Panc1 (cell line): ENCODE measurements at regions of chr11 and their contacts with region 1.

Region 1: DNA sequence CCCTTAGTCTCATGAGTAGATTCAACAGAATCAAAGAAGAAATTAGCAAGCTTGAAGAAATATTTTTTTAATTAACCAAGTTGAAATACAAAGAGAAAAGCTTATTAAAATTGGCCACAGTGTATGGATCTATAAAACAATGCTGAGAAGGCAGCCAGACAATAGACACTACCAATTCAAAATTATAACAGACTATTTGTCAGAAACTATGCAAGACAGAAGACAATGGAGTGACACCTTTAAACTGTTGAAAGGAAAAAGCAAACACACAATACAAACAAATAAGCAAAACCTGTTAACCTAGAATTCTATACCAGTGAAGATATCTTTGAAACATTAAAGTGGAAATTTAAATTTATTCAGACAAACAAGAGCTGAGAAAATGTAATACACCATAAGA is 225.4 kb downstream of the CASP12 start:
- DNase-seq: no peak
- ATAC-seq: no peak
- H3K4me3 ChIP-seq: no peak overlapping the region
- H3K27ac ChIP-seq: no peak overlapping the region
- H3K4me1 ChIP-seq: no peaks in the 10 kb centered on the region
- H3K27me3 ChIP-seq: no peaks in the 10 kb centered on the region
- CTCF ChIP-seq: no peak

Region 2: DNA sequence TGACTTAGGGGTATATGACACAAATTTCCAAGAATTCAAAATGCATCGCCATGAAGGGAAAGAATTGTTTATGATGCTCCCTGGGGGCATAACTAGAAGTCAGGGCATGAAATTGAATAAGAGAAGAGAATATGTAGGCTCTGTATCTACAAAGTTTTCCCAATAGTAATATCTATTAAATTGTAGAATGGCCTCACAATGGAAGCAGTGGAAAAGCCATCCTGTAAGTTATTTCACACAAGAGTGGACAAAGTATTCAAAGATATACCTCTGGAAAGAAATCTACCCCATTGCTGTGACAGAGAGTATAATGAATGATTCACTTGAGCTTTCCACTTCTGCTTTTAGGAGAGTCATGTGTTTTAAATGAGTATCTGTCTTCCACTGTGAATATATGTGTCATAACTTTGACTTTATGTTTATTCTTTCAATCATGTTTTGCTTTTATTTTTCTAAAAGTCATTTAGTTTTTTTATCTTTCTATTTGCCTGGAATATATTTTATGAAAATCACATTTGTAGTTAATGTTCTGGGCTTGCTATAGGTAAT is 702.1 kb before region 1 on chr11:
- CTCF ChIA-PET with region 1: no interaction called
- POLR2A ChIA-PET with region 1: no interaction called
- in situ Hi-C with region 1: no loop called
- intact Hi-C with region 1: no loop called
- DNase-seq: no peak
- ATAC-seq: no peak
- H3K4me3 ChIP-seq: no peak overlapping the region
- H3K27ac ChIP-seq: no peak overlapping the region
- H3K4me1 ChIP-seq: no peaks in the 10 kb centered on the region
- H3K27me3 ChIP-seq: no peaks in the 10 kb centered on the region
- CTCF ChIP-seq: no peak

Region 3: GRCh38 chr11:104728927-104729326 is 56.0 kb after region 1 on chr11:
- CTCF ChIA-PET with region 1: no interaction called
- POLR2A ChIA-PET with region 1: no interaction called
- in situ Hi-C with region 1: no loop called
- intact Hi-C with region 1: loop called (anchors 5 kb)
- DNase-seq: no peak
- ATAC-seq: no peak
- H3K4me3 ChIP-seq: no peak overlapping the region
- H3K27ac ChIP-seq: no peak overlapping the region
- H3K4me1 ChIP-seq: no peaks in the 10 kb centered on the region
- H3K27me3 ChIP-seq: no peaks in the 10 kb centered on the region
- CTCF ChIP-seq: no peak

Region 4: GRCh38 chr11:105265859-105266258 is 593.0 kb after region 1 on chr11:
- CTCF ChIA-PET with region 1: no interaction called
- POLR2A ChIA-PET with region 1: no interaction called
- in situ Hi-C with region 1: no loop called
- intact Hi-C with region 1: no loop called
- DNase-seq: no peak
- ATAC-seq: no peak
- H3K4me3 ChIP-seq: no peak overlapping the region
- H3K27ac ChIP-seq: no peak overlapping the region
- H3K4me1 ChIP-seq: no peaks in the 10 kb centered on the region
- H3K27me3 ChIP-seq: no peaks in the 10 kb centered on the region
- CTCF ChIP-seq: no peak